PC-3 (cell line): ENCODE measurements at regions of chr14 and their contacts with region 1.

Region 1: DNA sequence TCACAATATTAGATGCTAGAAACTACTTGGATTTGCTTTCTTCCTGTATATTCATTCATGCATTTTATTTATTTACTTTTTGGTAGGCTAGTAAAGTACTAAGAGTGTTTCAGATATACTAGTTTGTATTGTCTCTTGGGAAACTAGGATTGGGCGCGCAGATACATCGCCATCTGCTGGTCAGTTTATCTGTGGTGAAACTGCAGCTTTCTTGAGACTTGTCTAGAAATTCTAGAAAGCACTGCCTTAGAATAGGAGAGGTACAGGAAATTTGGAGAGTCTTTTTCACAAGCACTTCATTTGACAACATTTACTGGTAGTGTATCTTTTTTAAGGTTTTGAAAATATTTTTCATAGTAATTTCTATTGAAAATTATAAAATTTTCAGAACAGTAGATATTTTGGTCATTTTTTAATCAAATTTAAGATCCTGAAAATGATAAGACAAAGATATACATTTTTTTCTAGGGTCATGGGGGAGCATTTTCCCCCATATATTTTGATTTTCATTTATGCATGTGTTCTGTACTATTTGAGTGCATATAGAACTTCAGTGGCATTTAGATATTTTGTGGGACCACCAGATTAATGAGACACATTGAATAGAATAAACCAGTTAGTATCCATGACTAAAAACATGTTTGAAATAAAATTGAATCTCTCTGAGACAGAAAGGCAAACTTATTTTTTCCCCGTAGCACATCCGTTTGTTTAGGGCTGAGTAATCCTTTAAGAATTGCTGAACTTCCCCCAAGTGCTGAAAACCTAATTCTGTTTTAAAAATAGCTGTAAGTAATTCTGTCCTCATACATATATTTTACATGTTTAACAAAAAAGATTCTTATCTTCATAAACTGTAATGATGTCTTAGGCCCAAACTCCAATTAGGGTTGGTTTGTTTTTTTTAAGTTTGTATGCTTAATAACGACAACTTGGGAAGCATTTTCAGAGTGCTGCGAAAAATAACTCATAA is 44.5 kb downstream of the SLC38A6 start:
- DNase-seq: peak; percentile 96
- ATAC-seq: peak; percentile 89
- H3K4me3 ChIP-seq: peak overlapping the region; percentile 48
- H3K27ac ChIP-seq: peak overlapping the region; percentile 82
- H3K4me1 ChIP-seq: peaks cover 39% of the 10 kb centered on the region
- H3K27me3 ChIP-seq: no peaks in the 10 kb centered on the region
- CTCF ChIP-seq: peak; percentile 99

Region 2: GRCh38 chr14:60656686-60657455 is 368.7 kb before region 1 on chr14:
- CTCF ChIA-PET with region 1: no interaction called
- POLR2A ChIA-PET with region 1: interaction called, 4 read pairs
- intact Hi-C with region 1: loop called (anchors 1 kb)
- DNase-seq: peak; percentile 76
- ATAC-seq: peak; percentile 59
- H3K4me3 ChIP-seq: peak overlapping the region; percentile 80
- H3K27ac ChIP-seq: peak overlapping the region; percentile 19
- H3K4me1 ChIP-seq: peaks cover 31% of the 10 kb centered on the region
- H3K27me3 ChIP-seq: no peaks in the 10 kb centered on the region
- CTCF ChIP-seq: peak; percentile 83

Region 3: DNA sequence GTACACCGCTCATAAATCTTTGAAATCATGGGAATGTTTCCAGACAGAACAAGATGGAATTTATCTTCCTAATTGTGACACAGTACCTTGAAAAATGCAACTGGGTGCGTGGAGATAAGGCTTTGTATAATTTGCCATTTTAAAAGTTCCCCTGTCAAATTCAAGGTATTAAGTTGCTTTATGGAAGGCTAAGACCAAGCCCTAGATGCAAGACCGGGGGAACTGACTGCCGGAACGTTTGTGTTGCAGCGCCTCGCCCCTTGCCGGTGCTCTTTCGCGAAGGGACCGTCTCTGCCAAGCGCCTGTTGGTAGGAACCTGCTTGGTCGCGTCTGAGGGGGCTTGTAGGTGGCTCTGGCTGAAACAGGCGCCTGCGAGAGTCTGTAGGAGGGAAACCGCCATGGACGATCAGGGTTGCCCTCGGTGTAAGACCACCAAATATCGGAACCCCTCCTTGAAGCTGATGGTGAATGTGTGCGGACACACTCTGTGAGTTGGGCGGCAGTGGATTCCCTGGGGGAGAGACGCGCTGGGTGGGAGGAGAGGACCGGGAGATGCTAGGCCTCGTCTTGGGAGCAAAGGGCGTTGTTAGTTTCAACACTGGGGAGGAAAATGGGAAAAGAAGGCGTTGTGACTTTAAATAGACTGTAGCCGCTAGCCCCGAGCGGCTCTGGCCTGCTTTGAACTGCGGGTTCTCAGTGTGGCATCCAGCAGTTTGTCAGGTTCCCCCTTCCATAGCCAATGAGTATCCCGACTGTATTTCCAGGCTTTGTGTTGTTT is 290.9 kb before region 1 on chr14 and contains the start of gene MNAT1:
- CTCF ChIA-PET with region 1: no interaction called
- POLR2A ChIA-PET with region 1: no interaction called
- intact Hi-C with region 1: loop called (anchors 1 kb)
- DNase-seq: peak; percentile 95
- ATAC-seq: peak; percentile 84
- H3K4me3 ChIP-seq: peak within 1 kb of the TSS; percentile 94
- H3K27ac ChIP-seq: no peak within 1 kb of the TSS
- H3K4me1 ChIP-seq: peaks cover 15% of the 10 kb centered on the region
- H3K27me3 ChIP-seq: no peaks in the 10 kb centered on the region
- CTCF ChIP-seq: no peak
- total RNA-seq, gene MNAT1: 88.6 and 95.7 TPM in 2 replicates

Region 4: GRCh38 chr14:60965402-60965801 is 60.1 kb before region 1 on chr14:
- CTCF ChIA-PET with region 1: no interaction called
- POLR2A ChIA-PET with region 1: interaction called, 4 read pairs
- intact Hi-C with region 1: loop called (anchors 1 kb)
- DNase-seq: peak; percentile 66
- ATAC-seq: peak; percentile 92
- H3K4me3 ChIP-seq: no peak overlapping the region
- H3K27ac ChIP-seq: peak overlapping the region; percentile 27
- H3K4me1 ChIP-seq: peaks cover 5% of the 10 kb centered on the region; the same call in 1 of the 2 replicates
- H3K27me3 ChIP-seq: no peaks in the 10 kb centered on the region
- CTCF ChIP-seq: no peak

Region 5: DNA sequence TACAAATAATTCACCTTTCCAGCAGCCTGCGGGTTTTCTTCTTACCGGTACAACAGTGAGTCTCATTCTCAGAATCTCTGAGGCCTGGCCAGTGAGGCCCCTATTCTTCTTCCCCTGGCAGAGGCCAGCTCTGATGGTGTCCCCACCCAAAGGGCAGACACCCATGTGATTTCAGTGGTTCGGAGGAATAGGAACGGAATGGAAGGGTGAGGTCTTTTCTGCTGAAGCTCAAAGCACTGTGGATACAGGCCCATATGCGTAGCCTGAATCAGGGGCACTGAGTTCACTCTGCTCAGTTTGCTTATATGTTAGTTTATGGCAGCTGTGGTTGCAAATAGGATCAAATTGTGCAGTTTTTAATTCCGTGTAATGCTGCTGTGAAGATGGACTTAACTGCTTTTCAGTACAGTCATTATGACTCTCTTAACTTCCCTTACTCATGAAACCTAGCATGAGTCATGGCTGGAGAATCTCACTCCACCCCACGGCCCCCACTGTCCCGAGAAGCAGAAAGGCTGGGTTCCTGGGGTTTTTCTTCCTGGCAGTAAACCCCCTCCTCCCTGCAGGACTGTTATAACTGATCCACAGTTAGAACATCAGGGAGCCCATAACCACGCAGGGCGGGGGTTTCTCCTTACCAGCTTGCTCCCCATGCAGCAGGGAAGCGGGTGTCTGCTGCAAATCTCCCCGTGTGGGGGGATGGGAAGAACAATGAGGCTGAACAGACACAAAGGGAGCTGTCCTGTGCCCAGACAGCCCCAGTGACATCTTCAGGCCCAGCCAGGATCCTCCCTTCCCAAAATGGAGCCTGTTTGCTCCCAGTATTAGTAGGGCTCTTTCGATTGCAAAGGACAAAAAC is 78.2 kb after region 1 on chr14:
- CTCF ChIA-PET with region 1: interaction called, 3 read pairs
- POLR2A ChIA-PET with region 1: interaction called, 7 read pairs
- intact Hi-C with region 1: loop called (anchors 1 kb)
- DNase-seq: peak; percentile 99
- ATAC-seq: peak; percentile 86
- H3K4me3 ChIP-seq: peak overlapping the region; percentile 17; the same call in 1 of the 2 replicates
- H3K27ac ChIP-seq: peak overlapping the region; percentile 96
- H3K4me1 ChIP-seq: peaks cover 45% of the 10 kb centered on the region
- H3K27me3 ChIP-seq: no peaks in the 10 kb centered on the region
- CTCF ChIP-seq: no peak

Region 6: DNA sequence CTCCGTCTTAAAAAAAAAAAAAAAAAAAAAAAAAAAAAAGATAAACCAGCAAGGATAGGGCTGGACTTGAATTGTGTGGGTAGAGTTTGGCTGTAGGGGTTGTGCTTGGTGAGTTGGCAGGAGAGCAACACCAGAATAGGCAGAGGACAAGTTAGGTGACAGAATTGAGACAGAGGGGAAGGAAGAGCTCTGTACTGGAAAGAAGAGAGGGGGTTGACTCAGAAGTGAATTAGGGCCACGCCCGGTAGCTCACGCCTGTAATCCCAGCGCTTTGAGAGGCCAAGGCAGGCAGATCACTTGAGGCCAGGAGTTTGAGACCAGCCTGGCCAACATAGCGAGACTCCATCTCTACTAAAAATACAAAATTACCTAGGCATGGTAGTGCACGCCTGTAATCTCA is 261.7 kb after region 1 on chr14:
- CTCF ChIA-PET with region 1: interaction called, 4 read pairs
- POLR2A ChIA-PET with region 1: no interaction called
- intact Hi-C with region 1: loop called (anchors 1 kb)
- DNase-seq: peak; percentile 40
- ATAC-seq: no peak
- H3K4me3 ChIP-seq: no peak overlapping the region
- H3K27ac ChIP-seq: no peak overlapping the region
- H3K4me1 ChIP-seq: peaks cover 45% of the 10 kb centered on the region
- H3K27me3 ChIP-seq: no peaks in the 10 kb centered on the region
- CTCF ChIP-seq: no peak